A673 (cell line): ENCODE measurements at regions of chr10 and their contacts with region 1.

Region 1: GRCh38 chr10:104925232-104925851 is 284.3 kb downstream of the SORCS3 start:
- DNase-seq: peak; percentile 56
- H3K4me3 ChIP-seq: no peak overlapping the region
- H3K27ac ChIP-seq: no peak overlapping the region
- H3K4me1 ChIP-seq: no peaks in the 10 kb centered on the region
- H3K27me3 ChIP-seq: peaks cover 53% of the 10 kb centered on the region
- CTCF ChIP-seq: peak; percentile 78

Region 2: DNA sequence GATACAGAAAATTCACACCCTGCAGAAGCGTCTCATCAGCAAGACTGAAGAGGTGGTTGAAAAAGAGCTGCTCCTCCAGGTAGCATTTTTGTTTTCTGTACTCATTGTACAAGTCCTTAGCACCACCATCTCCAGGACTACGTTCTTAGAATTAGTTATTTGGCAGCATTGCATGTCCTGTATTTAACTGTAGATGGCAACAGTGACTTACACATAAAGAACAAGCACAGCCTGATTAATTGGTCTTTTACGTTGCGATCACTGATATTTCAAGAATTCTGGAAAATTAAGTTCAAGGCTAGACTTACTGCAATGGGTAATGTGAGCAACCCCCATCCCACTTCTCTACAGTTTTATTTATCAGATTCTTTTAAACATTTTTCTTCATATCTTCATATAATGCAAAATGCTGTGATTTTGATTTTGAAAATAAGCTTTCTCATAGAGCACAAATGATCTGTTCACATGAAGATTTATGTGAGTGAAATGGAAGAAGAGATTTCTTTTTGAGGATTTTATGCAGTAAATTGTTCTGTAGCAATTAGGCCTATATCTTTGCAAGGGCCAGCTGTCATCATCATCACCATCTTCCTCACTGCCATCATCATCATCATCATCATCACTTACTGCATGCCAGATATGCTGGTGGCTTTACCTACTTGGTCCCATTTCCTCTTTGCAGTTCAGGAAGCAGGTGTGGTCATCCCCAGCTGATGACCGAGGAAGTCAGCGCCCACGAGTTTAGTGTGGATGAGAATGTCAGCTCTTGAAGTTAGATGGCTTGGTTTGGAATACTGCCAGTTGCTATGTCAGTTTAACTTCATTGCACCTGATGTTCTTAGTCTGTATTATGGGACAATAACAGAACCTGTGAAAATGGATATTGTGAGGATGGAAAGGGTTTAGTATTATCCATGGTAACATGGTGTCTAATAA is 518.4 kb before region 1 on chr10:
- CTCF ChIA-PET with region 1: no interaction called
- POLR2A ChIA-PET with region 1: no interaction called
- intact Hi-C with region 1: loop called (anchors 2 kb)
- DNase-seq: peak; percentile 57
- H3K4me3 ChIP-seq: no peak overlapping the region
- H3K27ac ChIP-seq: no peak overlapping the region
- H3K4me1 ChIP-seq: no peaks in the 10 kb centered on the region
- H3K27me3 ChIP-seq: peaks cover 49% of the 10 kb centered on the region
- CTCF ChIP-seq: peak; percentile 71

Region 3: GRCh38 chr10:104580774-104581675 is 344.3 kb before region 1 on chr10:
- CTCF ChIA-PET with region 1: interaction called, 3 read pairs
- POLR2A ChIA-PET with region 1: no interaction called
- intact Hi-C with region 1: loop called (anchors 5 kb)
- DNase-seq: peak; percentile 74
- H3K4me3 ChIP-seq: no peak overlapping the region
- H3K27ac ChIP-seq: no peak overlapping the region
- H3K4me1 ChIP-seq: no peaks in the 10 kb centered on the region
- H3K27me3 ChIP-seq: peaks cover 25% of the 10 kb centered on the region
- CTCF ChIP-seq: peak; percentile 89

Region 4: DNA sequence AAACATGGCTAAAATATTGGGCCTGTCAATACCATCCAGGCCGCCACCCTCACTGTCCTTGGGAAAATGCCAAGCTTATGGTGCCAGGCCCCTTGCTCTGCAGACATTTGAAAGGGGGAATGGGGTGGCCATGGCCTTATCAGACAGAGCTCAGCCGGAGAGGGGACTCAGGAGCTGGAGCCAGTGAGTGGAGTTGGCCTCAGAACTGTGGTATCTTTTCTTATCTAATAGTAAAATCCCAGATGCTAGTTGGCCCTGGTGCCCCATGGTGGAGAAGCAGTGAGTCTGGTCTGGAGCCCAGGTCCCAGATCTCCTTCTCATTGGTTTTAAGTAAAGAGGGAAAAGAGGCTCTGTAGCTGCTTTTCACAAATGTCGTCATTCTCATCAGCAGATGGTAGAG is 333.9 kb before region 1 on chr10:
- CTCF ChIA-PET with region 1: no interaction called
- POLR2A ChIA-PET with region 1: no interaction called
- intact Hi-C with region 1: no loop called
- DNase-seq: no peak
- H3K4me3 ChIP-seq: no peak overlapping the region
- H3K27ac ChIP-seq: no peak overlapping the region
- H3K4me1 ChIP-seq: no peaks in the 10 kb centered on the region
- H3K27me3 ChIP-seq: peaks cover 81% of the 10 kb centered on the region
- CTCF ChIP-seq: no peak